ENCODE measurements at regions of chr17 and their contacts with region 1.

Region 1: GRCh38 chr17:28644985-28645939 is at the start of gene BLTP2:
- DNase-seq: peak; percentile 97 to 99
- ATAC-seq: peak; percentile 94 to 97
- H3K4me3 ChIP-seq: peak within 1 kb of the TSS; percentile 94
- H3K27ac ChIP-seq: peak within 1 kb of the TSS; percentile 97 to 99
- H3K4me1 ChIP-seq: peaks cover 32% of the 10 kb centered on the region
- CTCF ChIP-seq: no peak
- EP300 ChIP-seq: no peak
- POLR2A ChIP-seq: peak; percentile 82
- RAD21 ChIP-seq: no peak
- polyA plus RNA-seq, gene BLTP2: 150 and 243 TPM in 2 replicates

Region 2: GRCh38 chr17:28585851-28586250 is 59.4 kb before region 1 on chr17:
- CTCF ChIA-PET with region 1: no interaction called
- POLR2A ChIA-PET with region 1: no interaction called
- DNase-seq: no peak
- ATAC-seq: no peak
- H3K4me3 ChIP-seq: no peak overlapping the region
- H3K27ac ChIP-seq: no peak overlapping the region
- H3K4me1 ChIP-seq: no peaks in the 10 kb centered on the region
- CTCF ChIP-seq: no peak
- EP300 ChIP-seq: no peak
- POLR2A ChIP-seq: no peak
- RAD21 ChIP-seq: no peak

Region 3: DNA sequence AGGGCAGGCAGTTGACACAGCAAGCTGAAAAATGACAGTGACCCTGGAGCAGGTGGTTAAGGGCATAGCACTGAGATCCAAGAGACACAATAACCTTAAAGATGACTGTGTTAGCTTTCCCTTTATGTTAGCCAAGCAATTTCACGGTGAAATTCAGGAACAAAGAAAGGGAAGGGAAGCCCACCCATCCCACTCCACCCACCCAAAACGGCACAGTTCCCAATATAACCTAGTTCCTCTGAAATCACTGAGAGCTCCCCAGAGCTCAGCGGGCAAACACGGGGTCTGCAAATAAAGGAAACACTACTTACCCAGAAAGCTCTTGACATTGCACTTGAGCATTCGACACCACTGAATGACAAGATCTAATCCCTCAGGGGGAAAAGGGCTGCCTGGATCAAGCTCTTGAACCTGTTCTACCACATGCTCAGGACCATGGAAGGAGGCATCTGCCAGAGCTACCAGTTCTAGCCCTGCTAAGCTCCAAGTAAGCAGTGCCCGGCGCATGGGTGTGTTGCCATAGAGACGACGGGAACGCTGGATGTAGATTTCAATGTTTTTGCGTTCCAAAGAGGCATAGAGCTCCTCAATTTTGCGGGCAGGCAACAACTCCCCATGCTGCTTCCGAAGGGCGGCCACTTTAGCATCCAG is 10.9 kb before region 1 on chr17:
- CTCF ChIA-PET with region 1: interaction called, 90 read pairs
- POLR2A ChIA-PET with region 1: interaction called, 21 read pairs
- DNase-seq: no peak
- ATAC-seq: no peak
- H3K4me3 ChIP-seq: no peak overlapping the region
- H3K27ac ChIP-seq: no peak overlapping the region
- H3K4me1 ChIP-seq: no peaks in the 10 kb centered on the region
- CTCF ChIP-seq: no peak
- EP300 ChIP-seq: no peak
- POLR2A ChIP-seq: no peak
- RAD21 ChIP-seq: no peak

Region 4: DNA sequence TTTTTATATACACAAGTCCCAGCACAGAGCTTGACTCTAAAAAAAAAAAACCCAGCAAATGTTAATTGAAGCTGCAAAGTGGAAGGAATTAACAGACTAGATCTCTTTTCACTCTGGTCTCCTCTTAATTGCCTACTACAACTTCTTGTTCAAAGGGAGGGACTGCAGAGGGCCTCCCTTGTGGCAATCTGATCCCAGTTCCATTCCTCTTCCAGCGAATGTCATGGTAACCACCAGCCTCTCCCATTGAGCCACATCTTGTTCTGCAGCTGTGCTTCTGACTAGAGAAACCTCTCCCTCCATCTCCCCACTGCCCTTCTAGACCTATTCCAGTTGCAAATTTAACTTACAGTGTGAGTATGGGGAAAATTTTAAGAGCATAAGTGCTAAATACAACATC is 22.6 kb after region 1 on chr17:
- CTCF ChIA-PET with region 1: interaction called, 81 read pairs
- POLR2A ChIA-PET with region 1: interaction called, 41 read pairs
- DNase-seq: no peak
- ATAC-seq: peak in 1 of 2 experiments; percentile 17; a peak in 1 of 6 replicates
- H3K4me3 ChIP-seq: no peak overlapping the region
- H3K27ac ChIP-seq: no peak overlapping the region
- H3K4me1 ChIP-seq: peaks cover 15% of the 10 kb centered on the region
- CTCF ChIP-seq: no peak
- EP300 ChIP-seq: no peak
- POLR2A ChIP-seq: no peak
- RAD21 ChIP-seq: no peak

Region 5: GRCh38 chr17:28684963-28685362 is 39.7 kb after region 1 on chr17:
- CTCF ChIA-PET with region 1: interaction called, 32 read pairs
- POLR2A ChIA-PET with region 1: no interaction called
- DNase-seq: peak; percentile 63 to 86
- ATAC-seq: peak; percentile 81 to 87
- H3K4me3 ChIP-seq: no peak overlapping the region
- H3K27ac ChIP-seq: no peak overlapping the region
- H3K4me1 ChIP-seq: no peaks in the 10 kb centered on the region
- CTCF ChIP-seq: peak; percentile 58
- EP300 ChIP-seq: no peak
- POLR2A ChIP-seq: no peak
- RAD21 ChIP-seq: peak; percentile 79 to 80

Region 6: DNA sequence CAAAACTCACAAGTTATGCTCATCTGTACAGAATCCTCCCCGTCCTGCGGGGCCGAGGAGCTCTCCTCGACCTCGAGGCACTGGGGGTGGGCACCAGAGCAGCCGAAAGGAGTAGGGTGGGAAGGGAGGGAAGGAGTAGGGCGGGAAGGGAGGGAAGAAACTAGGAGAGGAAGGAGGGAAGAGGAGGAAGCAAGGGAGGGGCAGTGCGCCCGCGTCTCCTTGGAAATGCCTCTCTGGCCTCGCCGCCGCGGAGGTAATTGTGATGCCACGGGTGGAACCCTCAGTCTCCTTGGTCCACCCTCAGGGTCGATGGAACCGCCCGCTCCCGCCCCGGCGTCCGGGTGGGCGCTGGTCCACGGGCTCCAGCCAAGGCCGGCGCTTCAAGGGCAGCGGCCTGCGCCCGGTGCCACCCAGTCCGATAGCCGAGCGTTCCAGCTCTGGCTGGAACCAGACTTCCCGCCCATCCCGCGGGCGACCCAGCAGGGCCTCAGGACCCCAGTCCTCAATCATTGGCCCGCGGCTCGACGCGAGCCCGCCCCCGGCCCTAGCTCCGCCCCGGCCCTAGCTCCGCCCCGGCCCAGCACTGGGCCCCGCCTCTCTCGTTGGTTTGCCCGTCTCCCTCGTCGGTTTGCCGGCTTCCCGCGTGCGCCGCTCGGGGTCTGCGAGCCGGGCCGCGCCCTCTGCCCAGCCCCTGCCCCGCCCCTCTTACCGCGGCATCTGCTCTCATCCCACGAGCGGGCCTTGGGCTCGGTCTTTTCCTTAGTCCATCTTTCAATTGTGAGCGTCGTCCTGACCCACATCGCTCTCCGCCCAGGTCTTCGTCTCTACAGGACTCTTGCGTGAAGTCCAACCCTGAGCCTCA is 65.8 kb after region 1 on chr17:
- CTCF ChIA-PET with region 1: interaction called, 65 read pairs
- POLR2A ChIA-PET with region 1: interaction called, 21 read pairs
- DNase-seq: peak; percentile 92 to 97
- ATAC-seq: peak; percentile 81 to 94
- H3K4me3 ChIP-seq: peak overlapping the region; percentile 53
- H3K27ac ChIP-seq: peak overlapping the region; percentile 82 to 92
- H3K4me1 ChIP-seq: peaks cover 17% of the 10 kb centered on the region
- CTCF ChIP-seq: no peak
- EP300 ChIP-seq: no peak
- POLR2A ChIP-seq: peak; percentile 81
- RAD21 ChIP-seq: no peak

Measured in A549 (cell line).